ENCODE measurements at regions of chr5 and their contacts with region 1.

Region 1: DNA sequence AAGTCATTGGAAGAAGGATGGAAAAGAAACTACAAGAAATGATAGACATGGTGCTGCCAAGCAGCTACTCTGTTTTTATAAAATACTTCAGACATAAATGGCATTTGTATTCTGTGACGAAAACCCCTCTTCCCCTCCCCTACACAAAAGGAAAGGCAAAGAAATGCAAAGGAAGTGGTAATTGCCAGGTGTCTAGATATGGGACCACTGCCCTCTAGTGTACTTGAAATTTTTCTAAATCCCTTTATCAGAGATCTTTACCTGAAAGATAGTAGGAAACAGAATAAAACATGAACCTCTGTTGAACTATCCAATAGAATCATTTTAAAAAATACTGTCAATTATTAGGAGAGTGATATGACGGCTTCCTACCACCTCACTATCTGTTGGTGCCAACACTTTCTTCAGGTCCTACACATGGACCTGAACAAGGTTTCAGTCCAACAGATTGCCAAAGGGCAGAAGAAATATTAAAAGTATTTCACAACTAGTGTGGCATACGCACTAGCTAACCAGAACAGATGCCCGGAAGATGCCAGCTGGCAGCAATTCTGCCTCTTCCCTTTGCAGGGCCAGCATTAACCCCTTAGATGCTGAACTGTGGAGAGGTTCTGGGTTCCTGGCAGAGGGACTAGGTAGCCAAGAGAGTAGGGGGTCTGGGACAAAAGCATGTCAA is 104.1 kb downstream of the TSSK1B start:
- DNase-seq: peak; percentile 53

Region 2: GRCh38 chr5:112860929-112861637 is 469.6 kb before region 1 on chr5 and contains the start of gene SRP19:
- in situ Hi-C with region 1: no loop called
- DNase-seq: peak; percentile 94

Region 3: GRCh38 chr5:112878760-112879159 is 451.9 kb before region 1 on chr5:
- in situ Hi-C with region 1: no loop called
- DNase-seq: no peak

Region 4: GRCh38 chr5:113513384-113514288 is 183.0 kb after region 1 on chr5 and contains the start of gene YTHDC2:
- in situ Hi-C with region 1: loop called (anchors 25 kb)
- DNase-seq: peak; percentile 93

Region 5: GRCh38 chr5:113606298-113607134 is 275.8 kb after region 1 on chr5:
- in situ Hi-C with region 1: loop called (anchors 25 kb)
- DNase-seq: peak; percentile 80

Region 6: GRCh38 chr5:113742639-113743038 is 412.0 kb after region 1 on chr5:
- in situ Hi-C with region 1: no loop called
- DNase-seq: no peak

Measured in KBM-7 (cell line).